Heart left ventricle (tissue), 16 donors: ENCODE measurements at regions of chr1 and their contacts with region 1.

Region 1: GRCh38 chr1:51729156-51729823 is 112.4 kb downstream of the OSBPL9 start:
- DNase-seq: peak; percentile 93 to 96 (median 93)
- ATAC-seq: peak; percentile 90 to 97 (median 96)
- H3K4me3 ChIP-seq: peak overlapping the region; percentile 42 to 87 (median 73)
- H3K27ac ChIP-seq: peak overlapping the region; percentile 62 to 93 (median 88)
- H3K4me1 ChIP-seq: peaks cover 0 to 64% (median 43%) of the 10 kb centered on the region in 12 donors
- H3K27me3 ChIP-seq: no peaks in the 10 kb centered on the region
- CTCF ChIP-seq: no peak
- POLR2A ChIP-seq: peak in 1 of 2 donors; percentile 48

Region 2: GRCh38 chr1:51661081-51661518 is 68.2 kb before region 1 on chr1:
- intact Hi-C with region 1: loop called in 3 of 10 experiments (anchors 5 to 10 kb)
- DNase-seq: no peak
- ATAC-seq: peak; percentile 79 to 90 (median 84)
- H3K4me3 ChIP-seq: no peak overlapping the region
- H3K27ac ChIP-seq: peak overlapping the region; percentile 7 to 77 (median 54)
- H3K4me1 ChIP-seq: peaks cover 0 to 73% (median 42%) of the 10 kb centered on the region in 12 donors
- H3K27me3 ChIP-seq: no peaks in the 10 kb centered on the region
- CTCF ChIP-seq: no peak
- POLR2A ChIP-seq: no peak

Region 3: DNA sequence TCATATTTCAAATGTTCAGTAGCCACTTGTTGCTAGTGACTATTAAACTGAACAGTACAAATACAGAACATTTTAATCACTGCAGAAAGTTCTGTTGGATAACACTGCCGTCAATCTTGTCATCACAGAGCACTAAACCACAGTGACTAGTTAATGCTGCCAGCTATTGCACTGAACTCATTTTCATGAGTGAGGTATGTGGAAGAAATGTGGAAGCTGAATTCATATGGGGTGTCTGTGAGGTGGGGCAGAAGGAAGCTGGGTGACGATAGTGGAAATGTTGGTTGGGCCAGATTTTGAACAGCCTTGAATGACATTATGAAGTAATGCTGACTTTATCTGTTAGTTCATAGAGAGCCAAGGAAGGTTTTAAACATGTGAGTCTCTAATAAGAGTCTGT is 62.8 kb before region 1 on chr1:
- intact Hi-C with region 1: loop called in 3 of 10 experiments (anchors 5 to 10 kb)
- DNase-seq: peak in 2 of 5 donors; percentile 36 to 43
- ATAC-seq: peak; percentile 74 to 90 (median 84)
- H3K4me3 ChIP-seq: no peak overlapping the region
- H3K27ac ChIP-seq: peak overlapping the region; percentile 35 to 72 (median 44)
- H3K4me1 ChIP-seq: peaks cover 0 to 92% (median 63%) of the 10 kb centered on the region in 12 donors
- H3K27me3 ChIP-seq: no peaks in the 10 kb centered on the region
- CTCF ChIP-seq: no peak
- POLR2A ChIP-seq: no peak

Region 4: GRCh38 chr1:51690285-51690961 is 38.9 kb before region 1 on chr1:
- intact Hi-C with region 1: loop called in 1 of 10 experiments (anchors 5 kb)
- DNase-seq: no peak
- ATAC-seq: peak in 3 of 4 donors; percentile 53 to 71 (median 59)
- H3K4me3 ChIP-seq: no peak overlapping the region
- H3K27ac ChIP-seq: peak overlapping the region in 5 of 12 donors; percentile 9 to 38 (median 12)
- H3K4me1 ChIP-seq: peaks cover 0 to 67% (median 37%) of the 10 kb centered on the region in 12 donors
- H3K27me3 ChIP-seq: no peaks in the 10 kb centered on the region
- CTCF ChIP-seq: no peak
- POLR2A ChIP-seq: no peak

Region 5: DNA sequence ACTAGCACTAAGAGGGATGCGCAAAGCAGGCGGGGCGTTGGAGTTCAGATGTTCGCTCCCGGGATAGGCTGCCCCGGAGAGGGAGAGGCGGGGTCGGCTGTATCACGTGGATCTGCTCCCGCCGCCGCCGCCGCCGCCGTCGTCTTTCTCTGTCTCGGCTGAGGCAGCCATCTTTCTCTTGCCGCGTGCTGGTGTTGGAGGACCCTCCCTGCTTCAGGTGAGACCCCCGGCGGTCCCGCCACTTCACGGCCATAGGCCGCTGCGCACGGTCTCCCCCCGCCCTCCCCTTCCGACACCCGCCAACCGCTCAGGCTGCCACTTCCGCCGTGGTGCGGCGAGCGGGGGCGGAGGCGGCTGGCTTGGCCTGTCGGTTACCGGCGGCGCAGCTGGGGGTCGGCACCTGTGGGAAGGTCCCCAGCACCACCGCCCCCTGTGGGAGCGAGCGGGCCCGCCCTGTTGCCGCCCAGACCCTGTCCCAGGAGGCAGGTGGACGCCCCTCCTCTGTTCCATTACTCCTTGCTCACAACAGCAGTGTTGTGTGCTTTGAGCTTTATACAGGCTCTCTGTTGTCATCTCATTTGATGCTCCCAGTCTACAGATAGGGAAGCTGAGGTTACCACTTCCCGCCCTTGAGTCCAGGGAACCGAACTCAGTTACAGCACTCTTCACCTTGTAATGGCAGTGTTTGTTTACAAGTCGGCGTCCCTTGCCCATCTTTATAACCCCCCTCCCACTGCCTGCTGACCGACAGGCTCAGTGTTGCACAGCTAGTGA is 327.1 kb after region 1 on chr1 and contains the start of gene BTF3L4:
- intact Hi-C with region 1: no loop called
- DNase-seq: peak; percentile 95 to 98 (median 96)
- ATAC-seq: peak; percentile 98
- H3K4me3 ChIP-seq: peak within 1 kb of the TSS; percentile 63 to 97 (median 88)
- H3K27ac ChIP-seq: peak within 1 kb of the TSS; percentile 51 to 97 (median 90)
- H3K4me1 ChIP-seq: peaks cover 3 to 41% (median 34%) of the 10 kb centered on the region in 12 donors
- H3K27me3 ChIP-seq: no peaks in the 10 kb centered on the region
- CTCF ChIP-seq: peak in 1 of 12 donors; percentile 16
- POLR2A ChIP-seq: peak in 1 of 2 donors; percentile 81
- total RNA-seq, gene BTF3L4: 28.9 to 44.2 (median 33.1) TPM